Naive thymus-derived CD4-positive, alpha-beta T cell (primary cell): ENCODE measurements at regions of chr7 and their contacts with region 1.

Region 1: GRCh38 chr7:139104091-139104450 is 5.4 kb downstream of the ZC3HAV1 start:
- DNase-seq: peak in 5 of 9 donors; percentile 41 to 55 (median 51)
- ATAC-seq: no peak
- H3K4me3 ChIP-seq: peak overlapping the region; percentile 80
- H3K4me3 Mint-ChIP-seq: peak overlapping the region; percentile 88 to 100 (median 96)
- H3K27ac ChIP-seq: peak overlapping the region; percentile 93
- H3K27ac Mint-ChIP-seq: peak overlapping the region; percentile 83 to 95 (median 92)
- H3K4me1 ChIP-seq: peaks cover 13 to 16% of the 10 kb centered on the region in 2 donors
- H3K4me1 Mint-ChIP-seq: peaks cover 22 to 46% (median 34%) of the 10 kb centered on the region in 7 donors
- H3K27me3 ChIP-seq: no peaks in the 10 kb centered on the region
- H3K27me3 Mint-ChIP-seq: peaks cover 0 to 2% (median 0%) of the 10 kb centered on the region in 5 donors

Region 2: GRCh38 chr7:139049936-139050335 is 54.1 kb before region 1 on chr7:
- CTCF ChIA-PET with region 1: no interaction called
- POLR2A ChIA-PET with region 1: interaction called, 10 read pairs
- intact Hi-C with region 1: no loop called
- DNase-seq: no peak
- ATAC-seq: no peak
- H3K4me3 ChIP-seq: no peak overlapping the region
- H3K4me3 Mint-ChIP-seq: peak overlapping the region in 1 of 10 donors; percentile 7
- H3K27ac ChIP-seq: no peak overlapping the region
- H3K27ac Mint-ChIP-seq: peak overlapping the region in 7 of 9 donors; percentile 26 to 86 (median 62)
- H3K4me1 ChIP-seq: peaks cover 13 to 17% of the 10 kb centered on the region in 2 donors
- H3K4me1 Mint-ChIP-seq: peaks cover 17 to 68% (median 54%) of the 10 kb centered on the region in 7 donors
- H3K27me3 ChIP-seq: no peaks in the 10 kb centered on the region
- H3K27me3 Mint-ChIP-seq: no peaks in the 10 kb centered on the region

Region 3: DNA sequence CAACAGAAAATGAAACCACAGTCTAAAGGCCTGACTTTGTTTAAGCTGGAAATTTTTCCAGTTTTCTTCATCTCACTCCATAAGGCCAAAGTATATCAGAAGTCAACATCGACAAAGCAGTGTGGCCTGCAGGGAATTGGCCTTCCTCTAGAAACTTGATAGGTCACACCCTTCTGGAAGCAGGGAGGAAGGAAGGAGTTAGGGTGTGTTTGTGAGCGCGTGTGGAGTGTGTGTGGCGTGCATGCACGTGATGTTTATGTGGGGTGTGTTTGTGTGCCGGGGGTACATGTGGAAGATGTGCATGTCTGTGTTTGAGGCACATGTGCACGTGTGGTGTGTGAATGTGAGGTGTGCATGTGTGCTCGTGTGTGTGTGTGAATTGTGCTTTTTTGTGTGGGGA is 23.2 kb before region 1 on chr7:
- CTCF ChIA-PET with region 1: interaction called, 8 read pairs
- POLR2A ChIA-PET with region 1: interaction called, 57 read pairs
- intact Hi-C with region 1: no loop called
- DNase-seq: no peak
- ATAC-seq: peak; percentile 17
- H3K4me3 ChIP-seq: no peak overlapping the region
- H3K4me3 Mint-ChIP-seq: peak overlapping the region; percentile 51 to 98 (median 74)
- H3K27ac ChIP-seq: peak overlapping the region; percentile 56
- H3K27ac Mint-ChIP-seq: peak overlapping the region; percentile 60 to 94 (median 87)
- H3K4me1 ChIP-seq: peaks cover 34 to 75% of the 10 kb centered on the region in 2 donors
- H3K4me1 Mint-ChIP-seq: peaks cover 49 to 98% (median 92%) of the 10 kb centered on the region in 7 donors
- H3K27me3 ChIP-seq: no peaks in the 10 kb centered on the region
- H3K27me3 Mint-ChIP-seq: no peaks in the 10 kb centered on the region

Region 4: GRCh38 chr7:139086454-139086853 is 17.6 kb before region 1 on chr7:
- CTCF ChIA-PET with region 1: interaction called, 4 read pairs
- POLR2A ChIA-PET with region 1: interaction called, 151 read pairs
- intact Hi-C with region 1: no loop called
- DNase-seq: no peak
- ATAC-seq: no peak
- H3K4me3 ChIP-seq: no peak overlapping the region
- H3K4me3 Mint-ChIP-seq: peak overlapping the region in 9 of 10 donors; percentile 18 to 98 (median 65)
- H3K27ac ChIP-seq: peak overlapping the region; percentile 18
- H3K27ac Mint-ChIP-seq: peak overlapping the region; percentile 57 to 93 (median 84)
- H3K4me1 ChIP-seq: peaks cover 60 to 77% of the 10 kb centered on the region in 2 donors
- H3K4me1 Mint-ChIP-seq: peaks cover 65 to 98% (median 90%) of the 10 kb centered on the region in 7 donors
- H3K27me3 ChIP-seq: no peaks in the 10 kb centered on the region
- H3K27me3 Mint-ChIP-seq: no peaks in the 10 kb centered on the region

Region 5: DNA sequence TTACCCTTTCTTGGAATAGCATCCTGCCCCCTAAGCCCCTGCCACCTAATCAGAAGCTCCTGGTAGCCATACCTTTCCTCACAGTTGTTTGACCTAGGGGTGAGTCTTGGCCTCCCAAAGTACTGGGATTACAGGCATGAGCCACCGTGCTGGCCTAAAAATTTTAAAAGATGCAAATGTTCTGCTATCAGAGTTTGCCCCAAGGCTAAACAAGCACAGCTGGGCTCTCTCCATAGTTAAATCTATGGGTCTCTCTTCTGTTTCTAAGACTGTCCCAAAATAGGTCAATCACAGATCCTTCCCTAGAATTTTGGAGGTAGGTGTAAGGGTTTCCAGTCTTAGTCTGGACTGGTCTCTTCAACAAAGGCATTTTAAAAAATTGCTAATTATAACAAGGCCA is 114.1 kb after region 1 on chr7:
- CTCF ChIA-PET with region 1: no interaction called
- POLR2A ChIA-PET with region 1: no interaction called
- intact Hi-C with region 1: no loop called
- DNase-seq: no peak
- ATAC-seq: no peak
- H3K4me3 ChIP-seq: no peak overlapping the region
- H3K4me3 Mint-ChIP-seq: no peak overlapping the region
- H3K27ac ChIP-seq: no peak overlapping the region
- H3K27ac Mint-ChIP-seq: no peak overlapping the region
- H3K4me1 ChIP-seq: no peaks in the 10 kb centered on the region
- H3K4me1 Mint-ChIP-seq: no peaks in the 10 kb centered on the region
- H3K27me3 ChIP-seq: no peaks in the 10 kb centered on the region
- H3K27me3 Mint-ChIP-seq: peaks cover 3 to 21% (median 7%) of the 10 kb centered on the region in 5 donors